Esophagus muscularis mucosa (tissue), 4 donors: ENCODE measurements at regions of chr1 and their contacts with region 1.

Region 1: GRCh38 chr1:117605774-117606648 is at the start of gene TENT5C:
- DNase-seq: peak; percentile 99
- H3K4me3 ChIP-seq: peak within 1 kb of the TSS; percentile 69 to 91 (median 87)
- H3K27ac ChIP-seq: peak within 1 kb of the TSS; percentile 79 to 93 (median 84)
- H3K4me1 ChIP-seq: peaks cover 9 to 49% (median 42%) of the 10 kb centered on the region in 4 donors
- H3K27me3 ChIP-seq: no peaks in the 10 kb centered on the region
- CTCF ChIP-seq: peak in 2 of 3 experiments; percentile 6 to 7
- EP300 ChIP-seq: no peak
- POLR2A ChIP-seq: peak; percentile 78
- total RNA-seq, gene TENT5C: 0.92 to 6.8 (median 2.5) TPM

Region 2: DNA sequence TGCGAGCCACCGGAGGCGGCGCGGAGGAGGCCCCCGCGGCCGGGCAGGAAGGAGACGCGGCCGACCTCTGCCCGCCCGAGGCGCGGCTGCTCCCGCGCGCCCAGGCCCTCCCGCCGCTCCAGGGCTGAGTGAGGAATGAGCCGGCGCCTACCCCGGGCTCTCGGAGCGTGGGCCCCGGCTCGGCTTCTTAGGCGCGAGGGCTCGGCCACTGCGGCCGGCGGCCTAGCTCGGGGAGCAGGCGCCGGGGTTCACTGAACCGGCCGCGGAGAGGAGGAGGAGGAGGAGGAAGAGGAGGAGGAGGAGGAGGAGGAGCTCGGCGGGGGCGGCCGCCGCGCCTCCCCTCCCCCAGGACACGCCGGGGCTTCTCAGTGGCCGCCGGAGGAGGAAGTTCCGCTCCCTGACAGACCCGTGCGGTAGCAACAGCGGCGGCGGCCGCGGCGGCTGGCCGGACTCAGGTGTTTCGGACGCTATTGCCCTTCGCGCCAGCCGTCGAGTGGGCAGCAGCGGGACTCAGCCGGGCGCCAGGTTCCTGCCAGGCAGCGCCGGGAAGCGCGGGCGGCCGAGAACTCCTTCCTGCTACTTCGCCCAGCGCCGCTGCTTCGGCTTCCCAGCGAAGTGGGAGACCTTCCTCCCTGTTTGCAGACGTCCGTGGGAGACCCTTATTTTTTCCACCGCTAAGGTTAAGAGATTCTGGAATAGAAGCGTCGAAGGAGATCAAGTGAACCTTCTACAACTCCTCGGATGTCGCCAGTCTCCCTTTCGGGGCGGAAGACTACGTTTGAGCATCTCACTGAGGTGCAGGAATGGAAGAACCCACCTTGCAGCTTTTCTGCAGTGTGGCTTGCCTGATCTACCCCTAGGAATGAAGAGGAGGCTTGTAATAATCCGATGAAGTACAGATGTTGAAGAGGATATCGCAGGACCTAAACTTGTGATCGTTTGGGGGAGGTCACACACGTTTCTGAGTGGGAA is 238.7 kb before region 1 on chr1 and contains the start of gene MAN1A2:
- intact Hi-C with region 1: loop called (anchors 10 kb)
- DNase-seq: peak; percentile 96
- H3K4me3 ChIP-seq: peak within 1 kb of the TSS; percentile 78 to 91 (median 86)
- H3K27ac ChIP-seq: peak within 1 kb of the TSS; percentile 91 to 99 (median 98)
- H3K4me1 ChIP-seq: peaks cover 32 to 67% (median 65%) of the 10 kb centered on the region in 4 donors
- H3K27me3 ChIP-seq: no peaks in the 10 kb centered on the region
- CTCF ChIP-seq: no peak
- EP300 ChIP-seq: no peak
- POLR2A ChIP-seq: no peak
- total RNA-seq, gene MAN1A2: 45.4 to 51.7 (median 48.3) TPM

Region 3: GRCh38 chr1:117689997-117690625 is 84.1 kb after region 1 on chr1:
- intact Hi-C with region 1: loop called (anchors 5 kb)
- DNase-seq: peak; percentile 31
- H3K4me3 ChIP-seq: no peak overlapping the region
- H3K27ac ChIP-seq: no peak overlapping the region
- H3K4me1 ChIP-seq: peaks cover 12 to 23% (median 19%) of the 10 kb centered on the region in 4 donors
- H3K27me3 ChIP-seq: no peaks in the 10 kb centered on the region
- CTCF ChIP-seq: no peak
- EP300 ChIP-seq: no peak
- POLR2A ChIP-seq: no peak

Region 4: DNA sequence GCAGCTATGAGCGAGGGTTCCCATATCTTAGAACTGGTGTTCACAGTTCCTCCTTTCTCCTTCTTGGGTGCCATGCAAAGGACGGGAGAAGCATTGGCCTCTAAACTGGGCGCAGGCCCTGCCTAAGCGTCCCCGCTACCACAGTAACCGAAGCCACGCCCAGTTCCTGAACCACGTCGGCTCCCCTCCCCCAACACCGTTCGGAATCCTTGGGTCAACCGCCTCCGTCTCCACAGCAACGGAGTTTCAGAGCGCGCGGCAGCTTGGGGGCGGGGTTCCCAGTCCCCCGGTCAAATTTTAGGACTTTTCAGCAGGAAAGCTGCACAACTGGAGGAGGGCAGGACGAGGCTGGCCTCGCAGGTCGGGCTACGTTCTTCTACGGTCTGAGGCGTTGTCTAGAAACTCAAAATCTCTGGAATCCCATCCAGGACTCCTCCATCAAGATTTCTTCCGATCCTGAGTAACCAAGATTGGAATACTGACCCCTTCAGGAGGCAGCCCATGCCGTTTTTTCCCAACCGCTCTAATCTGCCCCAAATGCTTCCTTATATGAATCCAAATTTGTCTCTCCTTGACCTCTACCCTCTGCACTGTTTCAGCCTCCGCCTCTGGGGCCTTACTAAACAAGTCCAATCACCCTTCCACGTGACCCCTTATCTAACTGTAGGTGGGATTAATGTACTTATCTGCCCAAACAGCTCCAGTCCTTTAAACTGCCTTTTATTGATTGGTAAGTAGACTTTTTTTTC is 579.2 kb after region 1 on chr1 and contains the start of gene SPAG17:
- intact Hi-C with region 1: no loop called
- DNase-seq: no peak
- H3K4me3 ChIP-seq: peak within 1 kb of the TSS; percentile 42 to 54 (median 50)
- H3K27ac ChIP-seq: no peak within 1 kb of the TSS
- H3K4me1 ChIP-seq: peaks cover 0 to 12% (median 10%) of the 10 kb centered on the region in 4 donors
- H3K27me3 ChIP-seq: no peaks in the 10 kb centered on the region
- CTCF ChIP-seq: no peak
- EP300 ChIP-seq: no peak
- POLR2A ChIP-seq: no peak
- total RNA-seq, gene SPAG17: 0.17 to 0.23 TPM in 2 of 4 donors, not detected in the others